Cardiac septum (tissue), 1 donor: ENCODE measurements at regions of chr2 and their contacts with region 1.

Region 1: GRCh38 chr2:29115797-29116781 is 874 bp downstream of the CLIP4 start:
- DNase-seq: no peak

Region 2: GRCh38 chr2:29014811-29015421 is 101.2 kb before region 1 on chr2:
- intact Hi-C with region 1: loop called (anchors 5 kb)
- DNase-seq: peak; percentile 85

Region 3: GRCh38 chr2:29165362-29166236 is 49.5 kb after region 1 on chr2:
- intact Hi-C with region 1: no loop called
- DNase-seq: no peak